B cell (primary cell): ENCODE measurements at regions of chr10 and their contacts with region 1.

Region 1: DNA sequence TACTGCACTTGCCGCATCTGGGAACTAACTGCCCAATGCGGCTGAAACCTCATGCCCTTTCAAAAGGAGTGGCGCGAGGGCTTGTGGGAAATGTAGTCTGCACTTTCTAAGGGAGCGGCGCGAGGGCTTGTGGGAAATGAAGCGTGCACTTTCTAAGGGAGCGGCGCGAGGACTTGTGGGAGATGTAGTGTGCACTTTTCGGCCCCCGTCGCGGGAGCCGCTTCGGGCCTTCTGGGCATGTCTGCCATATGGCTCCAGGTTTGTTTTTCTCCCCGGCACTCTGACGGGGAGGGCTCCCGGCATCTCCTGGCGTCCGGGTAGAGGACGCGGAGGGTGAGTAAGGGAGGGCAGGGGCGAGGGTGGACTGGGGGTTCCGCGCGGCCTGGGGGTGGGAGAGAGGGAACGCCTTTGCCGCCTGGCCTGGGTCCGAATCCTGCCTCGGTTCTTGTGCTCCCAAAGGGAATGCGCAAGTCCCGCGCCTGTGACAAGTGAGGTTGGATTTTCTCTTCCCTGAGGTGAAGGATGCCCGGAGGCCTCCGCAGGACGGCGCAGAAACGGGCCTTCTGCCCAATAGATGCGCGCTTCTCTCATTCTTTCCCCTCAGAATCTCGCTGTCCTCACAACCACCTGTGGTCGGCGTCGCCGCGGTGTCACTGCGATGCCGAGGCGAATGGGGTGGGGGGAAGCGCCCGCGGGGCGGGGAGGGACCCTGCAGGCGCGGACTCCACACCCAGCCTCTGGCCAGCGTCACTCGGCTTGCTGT is at the start of gene ZNF37A:
- DNase-seq: peak; percentile 93
- ATAC-seq: peak; percentile 98
- H3K4me3 ChIP-seq: peak within 1 kb of the TSS; percentile 81 to 91 (median 89)
- H3K4me3 Mint-ChIP-seq: peak within 1 kb of the TSS; percentile 92
- H3K27ac ChIP-seq: peak within 1 kb of the TSS; percentile 84 to 88
- H3K27ac Mint-ChIP-seq: peak within 1 kb of the TSS; percentile 90
- H3K4me1 ChIP-seq: peaks cover 13 to 17% of the 10 kb centered on the region in 2 donors
- H3K4me1 Mint-ChIP-seq: peaks cover 22% of the 10 kb centered on the region
- H3K27me3 ChIP-seq: no peaks in the 10 kb centered on the region
- H3K27me3 Mint-ChIP-seq: no peaks in the 10 kb centered on the region
- CTCF ChIP-seq: no peak
- total RNA-seq, gene ZNF37A: 26.4 and 29.6 TPM in 2 replicates

Region 2: DNA sequence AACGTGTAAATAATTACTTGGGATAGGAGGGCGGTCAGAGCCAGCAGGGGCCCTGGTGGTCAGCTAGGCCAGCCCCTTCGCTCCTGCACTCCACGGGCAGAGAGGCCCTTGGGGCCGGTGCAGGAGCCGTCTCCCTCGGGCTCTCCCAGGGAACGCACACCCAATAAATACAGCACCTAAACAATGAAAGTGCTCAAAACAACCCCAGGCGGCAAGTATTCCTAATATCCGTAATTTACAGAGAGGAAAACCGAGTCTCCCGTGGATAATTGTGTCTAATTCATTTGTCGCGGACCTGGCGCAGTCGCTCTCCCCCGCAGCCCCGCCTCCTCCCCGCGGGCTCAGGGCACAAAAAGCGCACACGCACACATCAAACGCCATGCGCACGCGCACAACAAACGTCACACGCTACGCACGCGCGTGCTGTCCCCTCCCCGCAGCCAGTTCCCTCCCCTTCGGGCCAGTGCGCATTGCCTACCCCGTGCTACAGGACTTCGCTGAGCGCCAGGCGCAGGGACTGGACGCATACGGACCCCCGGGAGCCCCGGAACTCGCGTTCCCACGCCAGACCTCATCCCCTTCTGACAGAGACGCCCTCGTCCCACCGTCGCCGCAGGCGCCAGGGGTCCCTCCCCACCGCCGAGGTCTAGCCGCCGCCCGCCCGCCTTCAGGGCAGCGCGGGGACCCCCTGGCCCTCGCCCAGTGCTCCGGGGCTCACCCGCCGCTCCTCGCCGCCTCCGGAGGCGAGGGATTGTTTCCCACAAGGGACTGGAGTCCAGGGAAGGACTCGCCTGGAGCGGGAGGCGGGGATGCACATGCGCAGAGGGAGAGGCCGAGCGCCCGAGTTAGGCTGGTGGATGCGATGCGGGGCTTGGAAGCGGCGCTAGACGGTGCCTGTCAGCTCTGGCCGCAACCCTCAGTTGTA is 236.8 kb before region 1 on chr10 and contains the start of gene ZNF248:
- CTCF ChIA-PET with region 1: no interaction called
- POLR2A ChIA-PET with region 1: no interaction called
- intact Hi-C with region 1: loop called (anchors 1 kb)
- DNase-seq: peak; percentile 96
- ATAC-seq: peak; percentile 96
- H3K4me3 ChIP-seq: peak within 1 kb of the TSS; percentile 70 to 97 (median 88)
- H3K4me3 Mint-ChIP-seq: peak within 1 kb of the TSS; percentile 99
- H3K27ac ChIP-seq: peak within 1 kb of the TSS; percentile 85 to 95
- H3K27ac Mint-ChIP-seq: peak within 1 kb of the TSS; percentile 99
- H3K4me1 ChIP-seq: peaks cover 13 to 14% of the 10 kb centered on the region in 2 donors
- H3K4me1 Mint-ChIP-seq: peaks cover 35% of the 10 kb centered on the region
- H3K27me3 ChIP-seq: no peaks in the 10 kb centered on the region
- H3K27me3 Mint-ChIP-seq: no peaks in the 10 kb centered on the region
- CTCF ChIP-seq: no peak
- total RNA-seq, gene ZNF248: 18.2 and 19.5 TPM in 2 replicates

Region 3: GRCh38 chr10:38010119-38010903 is 84.0 kb before region 1 on chr10 and contains the start of gene ZNF33A:
- CTCF ChIA-PET with region 1: interaction called, 3 read pairs
- POLR2A ChIA-PET with region 1: no interaction called
- intact Hi-C with region 1: loop called (anchors 1 kb)
- DNase-seq: peak; percentile 97
- ATAC-seq: peak; percentile 84
- H3K4me3 ChIP-seq: peak within 1 kb of the TSS; percentile 72 to 78 (median 73)
- H3K4me3 Mint-ChIP-seq: peak within 1 kb of the TSS; percentile 80
- H3K27ac ChIP-seq: peak within 1 kb of the TSS; percentile 99
- H3K27ac Mint-ChIP-seq: peak within 1 kb of the TSS; percentile 99
- H3K4me1 ChIP-seq: peaks cover 16 to 17% of the 10 kb centered on the region in 2 donors
- H3K4me1 Mint-ChIP-seq: peaks cover 31% of the 10 kb centered on the region
- H3K27me3 ChIP-seq: no peaks in the 10 kb centered on the region
- H3K27me3 Mint-ChIP-seq: no peaks in the 10 kb centered on the region
- CTCF ChIP-seq: no peak
- total RNA-seq, gene ZNF33A: 86.6 and 96.1 TPM in 2 replicates

Region 4: DNA sequence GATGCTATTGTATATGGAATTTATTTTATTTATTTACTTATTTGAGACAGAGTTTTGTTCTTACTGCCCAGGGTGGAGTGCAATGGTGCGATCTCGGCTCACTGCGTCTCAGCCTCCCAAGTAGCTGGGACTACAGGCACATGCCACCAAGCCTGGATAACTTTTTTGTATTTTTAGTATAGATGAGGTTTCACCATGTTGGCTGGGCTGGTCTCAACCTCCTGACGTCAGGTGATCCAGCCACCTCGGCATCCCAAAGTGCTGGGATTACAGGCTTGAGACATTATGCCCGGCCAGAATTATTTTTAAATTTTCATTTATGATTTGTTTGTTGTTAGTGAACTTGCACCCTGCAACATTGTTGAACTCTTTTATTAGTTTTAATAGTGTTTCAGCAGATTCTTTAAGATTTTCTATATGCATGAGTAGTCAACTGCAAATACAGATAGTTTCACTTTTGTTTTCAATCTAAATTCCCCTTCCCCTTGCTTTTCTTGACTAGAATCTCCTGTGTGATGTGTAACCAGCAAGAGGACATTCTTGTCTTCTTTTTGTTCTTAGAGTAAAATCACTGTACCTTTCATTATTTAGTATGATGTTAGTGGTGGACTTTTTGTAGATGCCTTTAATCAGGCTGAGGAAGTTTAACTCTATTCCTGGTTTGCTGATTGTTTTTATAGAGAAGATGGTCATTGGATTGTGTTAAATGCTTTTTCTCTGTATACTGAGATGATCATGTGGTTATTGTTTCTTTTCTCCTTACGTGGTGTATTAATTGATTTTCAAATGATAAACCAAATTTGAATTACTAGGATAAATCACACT is 56.0 kb before region 1 on chr10:
- CTCF ChIA-PET with region 1: no interaction called
- POLR2A ChIA-PET with region 1: no interaction called
- intact Hi-C with region 1: loop called (anchors 1 kb)
- DNase-seq: peak; percentile 64
- ATAC-seq: peak; percentile 90
- H3K4me3 ChIP-seq: peak overlapping the region in 4 of 5 experiments; percentile 22 to 48 (median 35)
- H3K4me3 Mint-ChIP-seq: peak overlapping the region; percentile 76
- H3K27ac ChIP-seq: peak overlapping the region; percentile 76 to 81
- H3K27ac Mint-ChIP-seq: peak overlapping the region; percentile 89
- H3K4me1 ChIP-seq: peaks cover 9 to 14% of the 10 kb centered on the region in 2 donors
- H3K4me1 Mint-ChIP-seq: peaks cover 32% of the 10 kb centered on the region
- H3K27me3 ChIP-seq: no peaks in the 10 kb centered on the region
- H3K27me3 Mint-ChIP-seq: no peaks in the 10 kb centered on the region
- CTCF ChIP-seq: no peak